Spleen (tissue), 13 donors: ENCODE measurements at regions of chr2 and their contacts with region 1.

Region 1: DNA sequence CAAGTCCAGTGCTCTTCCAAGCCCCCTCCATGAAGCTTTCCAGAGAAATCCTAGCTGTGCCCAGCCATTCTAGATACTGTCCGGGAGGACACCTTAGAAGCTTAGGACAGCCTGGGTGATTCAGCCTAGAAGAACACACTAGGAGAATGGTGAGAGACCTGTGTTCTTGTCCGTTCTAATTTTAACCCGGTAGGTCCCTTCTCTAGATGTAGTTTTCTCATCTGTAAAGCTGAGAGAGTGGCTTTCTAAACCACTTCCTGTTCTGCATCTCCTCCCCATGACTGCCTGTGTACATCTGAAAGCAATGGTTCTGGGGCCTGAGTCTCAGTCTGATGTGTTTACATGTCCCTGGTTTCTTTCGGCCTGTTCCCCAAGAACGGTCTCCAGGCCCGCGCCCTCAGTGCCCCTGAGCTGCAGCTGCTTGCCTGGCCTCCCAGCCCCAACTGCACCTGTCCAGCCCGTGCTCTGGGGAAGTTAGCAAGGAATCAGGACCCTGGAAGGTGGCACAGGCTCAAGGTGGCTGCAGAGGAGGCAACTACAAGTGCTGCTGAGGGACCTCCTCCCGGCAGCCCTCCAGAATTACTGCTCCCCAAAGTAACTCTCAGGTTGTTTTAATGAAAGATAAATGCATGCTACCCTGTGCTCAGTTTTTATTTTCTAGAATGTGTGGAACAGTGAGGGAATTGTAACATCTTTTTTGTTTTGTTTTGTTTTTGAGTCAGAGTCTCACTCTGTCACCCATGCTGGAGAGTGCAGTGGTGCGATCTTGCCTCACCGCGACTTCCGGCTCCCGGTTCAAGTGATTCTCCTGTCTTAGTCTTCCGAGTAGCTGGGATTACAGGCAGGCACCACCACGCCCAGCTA is 105.9 kb downstream of the LBH start:
- DNase-seq: peak; percentile 88
- H3K4me3 ChIP-seq: peak overlapping the region in 3 of 8 donors; percentile 5 to 47 (median 7)
- H3K27ac ChIP-seq: peak overlapping the region; percentile 72 to 93 (median 84)
- H3K4me1 ChIP-seq: peaks cover 30 to 83% (median 64%) of the 10 kb centered on the region in 6 donors
- H3K27me3 ChIP-seq: no peaks in the 10 kb centered on the region
- CTCF ChIP-seq: no peak
- POLR2A ChIP-seq: no peak

Region 2: DNA sequence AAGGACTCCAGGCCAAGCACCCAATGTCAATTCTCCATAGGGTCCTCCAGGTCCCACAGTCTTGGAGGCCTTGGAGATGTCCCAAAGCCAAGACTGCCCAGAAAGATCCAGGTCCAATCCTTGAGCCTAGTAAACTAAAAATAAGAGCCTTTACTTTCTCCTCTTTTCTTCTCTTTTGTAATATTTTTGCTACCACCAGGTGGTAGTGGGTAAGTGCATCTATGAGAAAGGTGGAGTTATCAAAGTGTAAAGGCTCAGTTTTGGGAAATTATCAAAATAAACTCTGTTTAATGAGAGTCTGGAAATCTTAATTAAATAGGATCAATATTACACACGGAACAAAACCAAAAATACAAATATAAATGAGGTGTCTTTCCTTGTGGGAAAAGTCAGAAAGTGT is 692.3 kb before region 1 on chr2:
- intact Hi-C with region 1: no loop called
- DNase-seq: no peak
- H3K4me3 ChIP-seq: no peak overlapping the region
- H3K27ac ChIP-seq: no peak overlapping the region
- H3K4me1 ChIP-seq: no peaks in the 10 kb centered on the region
- H3K27me3 ChIP-seq: peaks cover 0 to under 1% (median 0%) of the 10 kb centered on the region in 7 donors
- CTCF ChIP-seq: no peak
- POLR2A ChIP-seq: no peak

Region 3: GRCh38 chr2:30197564-30198192 is 139.5 kb before region 1 on chr2:
- intact Hi-C with region 1: no loop called
- DNase-seq: no peak
- H3K4me3 ChIP-seq: no peak overlapping the region
- H3K27ac ChIP-seq: no peak overlapping the region
- H3K4me1 ChIP-seq: peaks cover 0 to 5% (median 0%) of the 10 kb centered on the region in 6 donors
- H3K27me3 ChIP-seq: no peaks in the 10 kb centered on the region
- CTCF ChIP-seq: no peak
- POLR2A ChIP-seq: no peak

Region 4: DNA sequence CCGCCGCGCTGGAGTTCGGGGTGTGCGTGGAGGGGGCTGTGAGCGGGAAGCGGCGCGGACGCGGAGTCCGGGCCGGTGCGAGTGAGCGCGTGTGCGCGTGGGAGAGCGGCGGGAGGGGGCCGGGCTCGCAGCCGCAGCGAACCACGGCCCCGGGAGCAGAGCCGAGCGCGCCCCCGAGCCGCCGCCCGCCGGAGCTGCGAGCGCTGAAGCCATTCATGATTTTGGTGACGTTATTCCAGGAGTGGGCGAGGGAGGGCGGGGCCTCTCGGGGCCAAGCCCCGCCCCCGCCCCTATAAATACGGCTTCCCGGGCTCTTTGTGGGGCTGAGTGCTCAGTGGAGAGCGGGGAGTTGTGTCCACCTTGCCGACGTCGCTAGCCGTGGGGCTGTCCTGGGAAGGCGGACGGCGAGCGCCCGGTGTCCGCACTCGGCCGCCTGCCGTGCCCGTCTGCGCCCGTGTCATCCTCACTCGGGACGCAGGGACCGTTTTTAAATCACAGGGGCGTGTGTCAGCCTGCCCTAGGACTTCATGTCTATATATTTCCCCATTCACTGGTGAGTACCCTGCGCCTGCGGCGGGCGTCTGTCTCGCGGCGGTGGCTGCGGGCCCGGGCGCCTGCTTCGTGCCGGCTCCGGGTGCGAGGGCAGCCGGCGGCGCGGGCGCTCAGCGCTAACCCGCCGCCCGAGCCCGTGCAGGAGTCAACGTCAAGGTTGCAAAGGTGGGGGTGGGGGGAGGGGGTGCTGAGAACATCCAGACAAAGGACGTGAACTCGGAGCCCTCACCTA is 105.8 kb before region 1 on chr2 and contains the start of gene LBH:
- intact Hi-C with region 1: loop called (anchors 10 kb)
- DNase-seq: peak; percentile 96
- H3K4me3 ChIP-seq: peak within 1 kb of the TSS; percentile 73 to 94 (median 80)
- H3K27ac ChIP-seq: peak within 1 kb of the TSS; percentile 83 to 98 (median 96)
- H3K4me1 ChIP-seq: peaks cover 22 to 90% (median 59%) of the 10 kb centered on the region in 6 donors
- H3K27me3 ChIP-seq: peaks cover 0 to 29% (median 0%) of the 10 kb centered on the region in 7 donors
- CTCF ChIP-seq: peak in 2 of 11 experiments; percentile 13 to 21
- POLR2A ChIP-seq: peak; percentile 84 to 99 (median 98)
- total RNA-seq, gene LBH: 86.2 to 178 (median 123) TPM

Region 5: DNA sequence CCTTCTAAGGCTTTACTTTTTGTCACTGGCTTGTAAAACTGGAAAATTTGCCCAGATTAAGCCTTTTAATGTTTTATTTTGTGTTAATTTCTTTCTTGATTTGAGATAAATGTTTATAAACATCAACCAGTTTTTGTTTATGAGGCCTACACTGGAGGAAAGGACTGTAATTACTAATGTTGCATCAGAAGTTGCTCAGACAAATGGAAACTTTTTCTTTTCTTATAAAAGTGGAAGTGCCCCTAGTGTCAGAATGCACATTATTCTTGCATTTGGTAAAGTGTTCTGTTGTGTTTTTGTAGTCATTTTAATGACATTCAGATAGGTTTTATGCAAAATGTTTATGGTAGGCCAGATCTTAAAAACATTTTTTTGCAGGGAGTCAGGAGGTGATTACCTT is 135.1 kb after region 1 on chr2:
- intact Hi-C with region 1: no loop called
- DNase-seq: no peak
- H3K4me3 ChIP-seq: no peak overlapping the region
- H3K27ac ChIP-seq: peak overlapping the region in 3 of 8 donors; percentile 12 to 57 (median 33)
- H3K4me1 ChIP-seq: peaks cover 0 to 35% (median 11%) of the 10 kb centered on the region in 6 donors
- H3K27me3 ChIP-seq: no peaks in the 10 kb centered on the region
- CTCF ChIP-seq: peak in 2 of 11 experiments; percentile 19 to 23
- POLR2A ChIP-seq: no peak